ENCODE measurements at regions of chr17 and their contacts with region 1.

Region 1: GRCh38 chr17:79839363-79840268 is at the start of gene CBX4:
- DNase-seq: peak; percentile 87
- ATAC-seq: peak; percentile 82
- H3K4me3 ChIP-seq: peak within 1 kb of the TSS; percentile 84 to 95
- H3K27ac ChIP-seq: peak within 1 kb of the TSS; percentile 94
- H3K4me1 ChIP-seq: peaks cover 39 to 53% of the 10 kb centered on the region in 2 experiments
- H3K27me3 ChIP-seq: no peaks in the 10 kb centered on the region
- CTCF ChIP-seq: peak; percentile 75 to 96 (median 81)
- POLR2A ChIP-seq: peak; percentile 91
- RAD21 ChIP-seq: peak; percentile 67
- total RNA-seq, gene CBX4: 60.9 TPM

Region 2: GRCh38 chr17:79741751-79742588 is 97.6 kb before region 1 on chr17:
- CTCF ChIA-PET with region 1: interaction called, 12 read pairs
- POLR2A ChIA-PET with region 1: interaction called, 10 read pairs
- RAD21 ChIA-PET with region 1: interaction called in 1 of 2 experiments, 5 read pairs
- intact Hi-C with region 1: no loop called
- DNase-seq: peak; percentile 46
- ATAC-seq: peak; percentile 87
- H3K4me3 ChIP-seq: peak overlapping the region; percentile 24 to 38
- H3K27ac ChIP-seq: no peak overlapping the region
- H3K4me1 ChIP-seq: peaks cover 11 to 33% of the 10 kb centered on the region in 2 experiments; a peak in 3 of 4 replicates
- H3K27me3 ChIP-seq: 0 out of 2 replicates have a peak, but pooled peaks cover 3% of the 10 kb centered on the region
- CTCF ChIP-seq: peak; percentile 89 to 99 (median 99)
- POLR2A ChIP-seq: no peak
- RAD21 ChIP-seq: peak; percentile 84

Region 3: DNA sequence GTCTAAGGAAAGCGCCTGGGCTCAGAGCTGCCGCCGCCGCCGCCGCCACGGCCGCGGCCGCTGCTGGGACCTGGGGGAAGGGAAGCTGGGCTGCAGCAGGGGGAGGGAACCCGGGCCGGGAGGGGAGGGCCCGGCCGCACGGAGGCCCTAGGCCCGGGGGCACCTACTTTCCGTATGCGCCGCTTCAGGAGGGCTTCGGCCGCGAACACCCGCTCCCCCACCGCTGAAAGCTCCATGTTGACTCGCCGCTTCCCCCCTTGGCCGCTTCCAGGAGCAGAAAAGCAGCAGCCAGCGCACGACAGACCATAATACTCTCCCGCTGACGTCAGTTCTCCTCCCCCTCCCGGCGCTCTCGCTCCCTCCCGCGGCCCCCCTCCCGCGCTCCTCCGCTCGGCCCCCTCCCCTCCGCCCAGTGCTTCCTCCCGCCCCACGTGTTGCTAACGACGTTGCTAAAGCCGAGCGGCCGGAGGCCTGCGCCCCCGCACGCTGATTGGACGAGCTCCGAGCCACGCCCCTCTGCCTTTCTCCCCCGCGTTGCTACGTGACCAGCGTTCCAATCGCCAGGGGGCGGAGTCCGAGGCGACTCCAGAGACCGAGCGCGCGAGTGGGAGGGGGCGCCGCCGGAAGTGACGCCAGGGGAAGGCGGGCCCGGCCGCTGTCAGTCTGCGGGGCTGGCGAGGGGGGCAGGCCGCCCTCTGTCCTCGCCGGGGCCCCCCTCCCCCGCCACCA is 42.7 kb before region 1 on chr17 and contains the start of gene CBX8:
- CTCF ChIA-PET with region 1: interaction called, 11 read pairs
- POLR2A ChIA-PET with region 1: interaction called, 22 read pairs
- RAD21 ChIA-PET with region 1: interaction called, 3 to 10 read pairs
- intact Hi-C with region 1: no loop called
- DNase-seq: peak; percentile 100
- ATAC-seq: peak; percentile 77
- H3K4me3 ChIP-seq: peak within 1 kb of the TSS; percentile 80 to 92
- H3K27ac ChIP-seq: peak within 1 kb of the TSS; percentile 90
- H3K4me1 ChIP-seq: peaks cover 41 to 62% of the 10 kb centered on the region in 2 experiments
- H3K27me3 ChIP-seq: no peaks in the 10 kb centered on the region
- CTCF ChIP-seq: no peak
- POLR2A ChIP-seq: peak; percentile 72
- RAD21 ChIP-seq: no peak
- total RNA-seq, gene CBX8: 29.0 TPM

Region 4: DNA sequence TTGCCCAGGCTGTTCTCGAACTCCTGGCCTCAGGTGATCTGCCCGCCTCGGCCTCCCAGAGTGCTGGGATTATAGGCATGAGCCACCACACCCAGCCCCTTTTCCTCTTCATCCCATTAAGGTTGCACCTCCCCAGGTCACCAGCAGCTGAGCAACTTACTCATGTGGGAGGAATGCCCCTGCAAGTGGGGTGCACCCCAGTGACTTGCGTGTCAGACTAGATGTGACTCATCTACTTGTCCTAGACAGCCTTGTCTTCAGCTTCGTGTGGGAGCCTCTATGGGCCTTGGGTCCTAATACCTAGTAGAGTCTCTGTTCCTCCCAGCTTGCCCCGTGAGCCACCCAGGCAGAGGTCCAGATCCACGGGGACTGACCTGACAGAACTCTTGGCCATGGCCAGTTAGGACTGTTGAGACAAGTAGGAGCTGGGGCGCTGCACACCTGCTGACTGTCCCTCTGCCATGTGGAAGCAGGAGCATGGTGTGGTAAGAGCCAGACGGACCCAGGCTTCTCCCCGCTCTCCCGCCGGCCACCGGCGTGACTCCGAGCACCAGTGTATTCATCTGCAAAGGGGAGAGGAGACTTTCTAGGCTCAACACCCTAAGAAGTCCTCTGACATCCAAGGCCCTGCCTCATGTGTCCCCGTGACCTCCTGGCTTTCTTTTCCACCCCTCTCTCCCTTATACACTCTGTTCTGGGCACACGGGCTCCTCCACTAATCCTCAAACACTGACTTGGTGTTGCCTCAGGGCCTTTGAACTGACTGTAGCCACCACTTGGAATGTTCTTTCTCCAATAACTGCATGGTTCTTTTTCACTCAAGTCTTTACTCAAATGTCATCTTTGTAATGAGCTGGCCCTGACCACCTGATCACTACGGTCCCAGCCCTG is 11.2 kb after region 1 on chr17:
- CTCF ChIA-PET with region 1: interaction called, 67 read pairs
- POLR2A ChIA-PET with region 1: interaction called, 73 read pairs
- RAD21 ChIA-PET with region 1: no interaction called
- intact Hi-C with region 1: no loop called
- DNase-seq: peak; percentile 91
- ATAC-seq: peak; percentile 84
- H3K4me3 ChIP-seq: peak overlapping the region in 1 of 2 experiments; percentile 16; a peak in 2 of 4 replicates
- H3K27ac ChIP-seq: peak overlapping the region; percentile 69
- H3K4me1 ChIP-seq: peaks cover 41 to 47% of the 10 kb centered on the region in 2 experiments
- H3K27me3 ChIP-seq: no peaks in the 10 kb centered on the region
- CTCF ChIP-seq: no peak
- POLR2A ChIP-seq: no peak
- RAD21 ChIP-seq: no peak

Region 5: GRCh38 chr17:79915850-79916430 is 76.3 kb after region 1 on chr17:
- CTCF ChIA-PET with region 1: interaction called, 11 read pairs
- POLR2A ChIA-PET with region 1: interaction called, 7 read pairs
- RAD21 ChIA-PET with region 1: interaction called in 1 of 2 experiments, 3 read pairs
- intact Hi-C with region 1: no loop called
- DNase-seq: peak; percentile 72
- ATAC-seq: peak; percentile 93
- H3K4me3 ChIP-seq: peak overlapping the region in 1 of 2 experiments; percentile 34; a peak in 2 of 4 replicates
- H3K27ac ChIP-seq: peak overlapping the region; percentile 41; the same call in 1 of the 2 replicates
- H3K4me1 ChIP-seq: peaks cover 34 to 40% of the 10 kb centered on the region in 2 experiments
- H3K27me3 ChIP-seq: no peaks in the 10 kb centered on the region
- CTCF ChIP-seq: peak; percentile 40 to 94 (median 68)
- POLR2A ChIP-seq: no peak
- RAD21 ChIP-seq: peak; percentile 99

Measured in HCT116 (cell line).